HepG2 (cell line): ENCODE measurements at regions of chr17 and their contacts with region 1.

Region 1: DNA sequence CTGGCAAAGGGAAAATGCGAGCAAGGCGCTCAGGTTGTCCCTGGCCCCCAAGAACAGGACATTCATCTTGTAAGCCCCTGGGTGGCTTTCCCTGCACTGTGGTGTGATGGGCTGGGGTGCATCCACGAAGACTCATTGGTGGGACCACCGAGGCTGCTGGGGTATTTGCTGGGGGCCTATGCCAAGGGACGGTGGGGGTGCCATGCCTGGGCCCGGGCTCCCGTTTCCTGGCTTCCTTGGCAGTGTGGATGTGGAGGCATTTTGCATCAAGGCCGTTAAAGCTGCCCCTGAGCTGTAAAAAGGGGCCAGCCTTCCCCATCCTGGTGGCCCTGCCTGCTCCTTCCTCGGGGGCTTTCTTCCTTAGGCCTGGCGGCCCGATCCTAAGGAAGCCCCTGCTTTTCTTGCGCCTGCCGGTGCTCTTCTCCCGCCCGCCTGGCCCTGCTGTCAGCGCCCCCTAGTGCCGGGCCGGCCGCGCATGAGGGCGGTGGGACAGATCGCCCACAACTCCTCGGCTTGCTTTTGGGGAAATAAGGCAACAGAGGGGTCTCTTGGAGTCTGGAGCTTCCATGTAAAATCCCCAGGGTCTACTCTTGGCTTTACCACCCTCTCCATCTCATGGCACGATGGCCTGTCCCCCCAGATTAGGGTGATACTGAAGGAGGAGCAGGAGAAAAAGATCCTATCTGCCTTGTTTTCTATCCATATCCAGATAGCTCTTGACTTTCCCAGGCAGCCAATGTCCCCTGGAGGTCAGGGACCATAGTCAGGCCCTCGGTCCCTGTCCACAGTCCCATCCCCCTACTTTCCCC is 9.8 kb upstream of the TBX2 start:
- DNase-seq: no peak
- ATAC-seq: peak; percentile 52
- H3K4me3 ChIP-seq: peak overlapping the region in 1 of 3 experiments; percentile 21; a peak in 1 of 6 replicates
- H3K27ac ChIP-seq: no peak overlapping the region
- H3K4me1 ChIP-seq: peaks cover 66% of the 10 kb centered on the region
- H3K27me3 ChIP-seq: no peaks in the 10 kb centered on the region
- CTCF ChIP-seq: peak; percentile 99
- EP300 ChIP-seq: 0 out of 4 replicates have a peak, but pooled peaks of 1 of the 2 experiments have one; percentile 13
- POLR2A ChIP-seq: no peak
- RAD21 ChIP-seq: peak; percentile 95

Region 2: GRCh38 chr17:60720763-60721531 is 668.9 kb before region 1 on chr17:
- CTCF ChIA-PET with region 1: no interaction called
- POLR2A ChIA-PET with region 1: no interaction called
- in situ Hi-C with region 1: loop called (anchors 10 kb)
- intact Hi-C with region 1: loop called (anchors 10 kb)
- DNase-seq: peak; percentile 64
- ATAC-seq: peak; percentile 70
- H3K4me3 ChIP-seq: no peak overlapping the region
- H3K27ac ChIP-seq: no peak overlapping the region
- H3K4me1 ChIP-seq: no peaks in the 10 kb centered on the region
- H3K27me3 ChIP-seq: no peaks in the 10 kb centered on the region
- CTCF ChIP-seq: peak; percentile 88
- EP300 ChIP-seq: no peak
- POLR2A ChIP-seq: no peak
- RAD21 ChIP-seq: peak; percentile 89

Region 3: GRCh38 chr17:61002316-61002736 is 387.5 kb before region 1 on chr17:
- CTCF ChIA-PET with region 1: interaction called, 3 read pairs
- POLR2A ChIA-PET with region 1: no interaction called
- in situ Hi-C with region 1: loop called (anchors 5 kb)
- intact Hi-C with region 1: loop called (anchors 5 kb)
- DNase-seq: peak; percentile 41
- ATAC-seq: no peak
- H3K4me3 ChIP-seq: no peak overlapping the region
- H3K27ac ChIP-seq: no peak overlapping the region
- H3K4me1 ChIP-seq: no peaks in the 10 kb centered on the region
- H3K27me3 ChIP-seq: no peaks in the 10 kb centered on the region
- CTCF ChIP-seq: peak; percentile 69
- EP300 ChIP-seq: no peak
- POLR2A ChIP-seq: no peak
- RAD21 ChIP-seq: peak; percentile 48; the same call in 1 of the 2 replicates

Region 4: GRCh38 chr17:61361084-61361483 is 28.8 kb before region 1 on chr17:
- CTCF ChIA-PET with region 1: interaction called, 3 read pairs
- POLR2A ChIA-PET with region 1: interaction called, 34 read pairs
- in situ Hi-C with region 1: no loop called
- intact Hi-C with region 1: loop called (anchors 1 kb)
- DNase-seq: peak; percentile 66
- ATAC-seq: no peak
- H3K4me3 ChIP-seq: no peak overlapping the region
- H3K27ac ChIP-seq: no peak overlapping the region
- H3K4me1 ChIP-seq: peaks cover 99% of the 10 kb centered on the region
- H3K27me3 ChIP-seq: no peaks in the 10 kb centered on the region
- CTCF ChIP-seq: no peak
- EP300 ChIP-seq: peak in 1 of 2 experiments; percentile 63; a peak in 2 of 4 replicates
- POLR2A ChIP-seq: no peak
- RAD21 ChIP-seq: no peak

Region 5: DNA sequence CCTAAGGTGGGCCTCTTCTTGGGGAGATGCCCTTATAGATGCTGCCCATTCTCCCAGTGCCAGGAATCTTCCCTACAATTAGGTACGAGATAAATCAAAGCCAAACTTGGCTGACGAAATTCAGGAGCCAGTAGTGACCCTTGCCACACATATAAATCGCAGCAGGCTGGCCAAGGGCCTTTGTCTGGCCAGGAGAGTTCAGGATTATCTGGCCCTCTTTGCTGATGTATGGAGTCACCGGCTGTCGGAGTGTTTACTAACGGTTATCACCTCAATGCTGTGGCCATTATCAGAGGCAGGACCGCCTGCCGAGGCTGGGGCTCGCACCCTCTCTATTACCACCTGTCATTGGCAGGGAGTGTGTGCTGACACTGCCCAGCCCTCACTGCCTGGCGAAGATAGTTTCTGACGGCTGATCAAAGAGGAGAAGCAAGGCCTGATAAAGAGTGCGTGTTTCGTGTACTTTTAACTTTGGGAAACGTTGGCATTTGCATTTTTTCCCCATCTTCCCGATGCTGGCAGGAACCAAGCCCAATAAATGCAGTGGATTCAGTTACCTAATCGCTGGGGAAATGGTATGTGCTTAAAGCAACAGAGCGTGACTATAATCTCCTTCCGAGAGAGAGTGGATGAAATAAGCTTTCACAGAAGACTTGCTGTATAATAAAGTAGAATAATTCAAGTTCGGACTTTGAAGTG is 23.0 kb before region 1 on chr17:
- CTCF ChIA-PET with region 1: interaction called, 3 read pairs
- POLR2A ChIA-PET with region 1: interaction called, 34 read pairs
- in situ Hi-C with region 1: no loop called
- intact Hi-C with region 1: loop called (anchors 1 kb)
- DNase-seq: peak; percentile 96
- ATAC-seq: peak; percentile 75
- H3K4me3 ChIP-seq: peak overlapping the region in 1 of 3 experiments; percentile 39; a peak in 2 of 6 replicates
- H3K27ac ChIP-seq: peak overlapping the region; percentile 89
- H3K4me1 ChIP-seq: peaks cover 85% of the 10 kb centered on the region
- H3K27me3 ChIP-seq: no peaks in the 10 kb centered on the region
- CTCF ChIP-seq: no peak
- EP300 ChIP-seq: peak; percentile 54 to 80; a peak in 1 of 4 replicates
- POLR2A ChIP-seq: 0 out of 4 replicates have a peak, but pooled peaks of 1 of the 2 experiments have one; percentile 23
- RAD21 ChIP-seq: no peak; the same call in 1 of the 2 replicates